ENCODE measurements at regions of chr1 and their contacts with region 1.

Region 1: GRCh38 chr1:51491166-51491981 is 27.7 kb downstream of the EPS15 start:
- DNase-seq: no peak
- ATAC-seq: peak; percentile 65
- H3K4me3 Mint-ChIP-seq: peak overlapping the region; percentile 68
- H3K27ac Mint-ChIP-seq: peak overlapping the region; percentile 85
- H3K4me1 Mint-ChIP-seq: peaks cover 69% of the 10 kb centered on the region
- H3K27me3 Mint-ChIP-seq: no peaks in the 10 kb centered on the region
- CTCF ChIP-seq: no peak

Region 2: GRCh38 chr1:51445351-51446090 is 45.9 kb before region 1 on chr1:
- CTCF ChIA-PET with region 1: no interaction called
- POLR2A ChIA-PET with region 1: no interaction called
- intact Hi-C with region 1: loop called (anchors 5 kb)
- DNase-seq: no peak
- ATAC-seq: no peak
- H3K4me3 Mint-ChIP-seq: no peak overlapping the region
- H3K27ac Mint-ChIP-seq: no peak overlapping the region
- H3K4me1 Mint-ChIP-seq: peaks cover 9% of the 10 kb centered on the region
- H3K27me3 Mint-ChIP-seq: no peaks in the 10 kb centered on the region
- CTCF ChIP-seq: no peak

Region 3: DNA sequence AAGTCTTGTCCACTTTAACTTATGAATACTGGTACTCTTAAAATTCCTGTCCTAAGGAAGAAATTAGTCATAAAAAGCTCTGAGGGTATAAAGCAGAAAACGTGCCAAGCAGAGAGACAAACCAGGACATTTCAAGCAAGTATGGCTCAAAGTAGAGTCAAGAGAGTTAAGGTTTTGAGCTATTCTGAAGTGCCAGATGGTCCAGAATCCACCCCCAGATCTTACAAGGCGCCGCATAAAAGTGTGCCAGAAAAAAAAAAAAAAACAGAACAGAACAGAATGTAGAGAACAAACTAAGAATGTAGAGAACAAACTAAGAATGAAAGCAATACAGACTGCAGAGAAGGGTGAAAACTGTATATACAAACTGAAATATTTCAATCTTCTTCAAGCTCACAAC is 15.2 kb after region 1 on chr1:
- CTCF ChIA-PET with region 1: no interaction called
- POLR2A ChIA-PET with region 1: interaction called, 18 read pairs
- intact Hi-C with region 1: loop called (anchors 1 kb)
- DNase-seq: no peak
- ATAC-seq: peak; percentile 22
- H3K4me3 Mint-ChIP-seq: peak overlapping the region; percentile 52
- H3K27ac Mint-ChIP-seq: peak overlapping the region; percentile 62
- H3K4me1 Mint-ChIP-seq: peaks cover 83% of the 10 kb centered on the region
- H3K27me3 Mint-ChIP-seq: no peaks in the 10 kb centered on the region
- CTCF ChIP-seq: no peak

Region 4: GRCh38 chr1:51564124-51564523 is 72.8 kb after region 1 on chr1:
- CTCF ChIA-PET with region 1: no interaction called
- POLR2A ChIA-PET with region 1: interaction called, 10 read pairs
- intact Hi-C with region 1: no loop called
- DNase-seq: no peak
- ATAC-seq: peak; percentile 87
- H3K4me3 Mint-ChIP-seq: peak overlapping the region; percentile 24
- H3K27ac Mint-ChIP-seq: peak overlapping the region; percentile 56
- H3K4me1 Mint-ChIP-seq: peaks cover 14% of the 10 kb centered on the region
- H3K27me3 Mint-ChIP-seq: no peaks in the 10 kb centered on the region
- CTCF ChIP-seq: no peak